ENCODE measurements at regions of chr19 and their contacts with region 1.

Region 1: DNA sequence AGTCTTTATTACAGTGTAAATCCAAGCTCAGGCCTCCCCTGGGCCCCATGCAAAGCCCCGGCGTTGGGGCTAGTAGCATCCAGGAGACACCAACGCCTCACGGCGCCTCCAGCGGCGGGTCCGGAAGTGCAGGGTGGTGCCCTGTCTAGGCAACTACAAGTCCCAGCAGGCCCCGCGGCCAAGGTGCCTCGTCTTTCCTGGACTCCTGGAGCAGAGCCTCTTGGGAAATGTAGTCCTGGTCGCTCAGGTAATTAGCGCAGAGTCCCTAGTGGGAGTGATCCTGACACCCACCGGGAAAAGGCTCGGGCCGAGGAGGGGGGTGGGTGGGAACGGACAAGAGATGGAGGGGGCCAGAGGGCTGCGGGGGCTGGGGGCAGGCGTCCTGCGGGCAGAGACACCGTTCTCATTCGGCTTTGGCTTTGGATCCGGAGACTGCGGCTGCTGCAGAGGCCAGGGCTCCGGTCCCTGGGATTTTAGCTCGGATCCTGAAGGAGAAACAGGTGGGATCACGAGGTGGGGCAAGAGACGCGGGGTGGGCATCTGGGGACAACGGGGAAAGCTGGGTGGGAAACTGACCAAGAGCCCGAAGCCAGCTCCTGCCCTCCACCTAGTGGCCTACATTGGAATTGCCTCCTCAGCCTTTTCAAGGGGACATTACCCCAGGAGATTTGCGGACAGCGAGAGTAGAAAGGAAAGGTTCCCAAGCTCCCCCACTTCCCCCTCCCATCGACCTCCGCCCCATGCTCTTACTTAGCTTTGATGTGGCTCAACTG is 11.4 kb downstream of the RTN2 start:
- DNase-seq: peak; percentile 100

Region 2: GRCh38 chr19:45469132-45469944 is 16.2 kb before region 1 on chr19:
- intact Hi-C with region 1: no loop called
- DNase-seq: peak; percentile 98

Region 3: GRCh38 chr19:46346821-46347571 is 861.5 kb after region 1 on chr19 and contains the start of gene PPP5C:
- intact Hi-C with region 1: no loop called
- DNase-seq: peak; percentile 97
- total RNA-seq, gene PPP5C: 44.3 to 46.8 TPM

Region 4: GRCh38 chr19:47336853-47337279 is 1851.4 kb after region 1 on chr19:
- intact Hi-C with region 1: loop called in 1 of 2 experiments (anchors 10 kb)
- DNase-seq: peak; percentile 91